Heart right ventricle (tissue), 16 donors: ENCODE measurements at regions of chr18 and their contacts with region 1.

Region 1: DNA sequence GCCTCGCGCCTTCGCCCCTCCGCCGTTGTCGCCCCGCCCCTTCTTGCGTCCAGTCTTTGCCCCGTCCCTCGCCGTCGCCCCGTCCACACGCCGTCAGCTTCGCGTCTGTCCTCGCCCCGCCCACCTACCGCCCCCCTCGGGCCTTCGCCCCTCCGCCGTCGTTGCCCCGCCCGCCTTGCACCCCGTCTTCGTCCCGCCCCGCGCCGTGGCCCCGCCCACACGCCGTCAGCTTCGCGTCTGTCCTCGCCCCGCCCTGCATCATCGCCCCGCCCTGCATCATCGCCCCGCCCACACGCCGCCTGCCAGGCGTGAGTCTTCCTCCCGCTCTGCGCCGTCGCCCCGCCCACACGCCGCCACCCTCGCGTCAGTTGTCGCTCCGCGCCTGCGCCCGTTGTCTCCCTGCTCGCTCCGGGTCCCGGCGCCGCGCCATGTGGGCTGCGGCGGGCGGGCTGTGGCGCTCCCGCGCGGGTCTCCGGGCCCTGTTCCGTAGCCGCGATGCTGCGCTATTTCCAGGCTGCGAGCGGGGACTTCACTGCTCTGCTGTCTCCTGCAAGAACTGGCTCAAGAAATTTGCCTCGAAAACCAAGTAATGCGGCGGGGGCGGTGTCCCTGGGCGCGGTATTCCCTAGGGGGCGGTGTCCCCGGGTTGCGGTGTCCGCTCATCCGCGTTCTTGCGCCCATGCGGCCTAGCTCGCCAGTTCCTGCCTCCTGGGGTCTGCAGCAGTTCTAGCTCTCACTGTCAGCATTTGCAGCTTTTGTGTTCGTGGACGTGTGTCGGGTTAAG is at the start of gene RBFA:
- DNase-seq: peak; percentile 100
- ATAC-seq: peak; percentile 94 to 97 (median 94)
- H3K4me3 ChIP-seq: peak within 1 kb of the TSS; percentile 45 to 96 (median 83)
- H3K27ac ChIP-seq: peak within 1 kb of the TSS; percentile 62 to 92 (median 88)
- H3K4me1 ChIP-seq: peaks cover 5 to 24% (median 11%) of the 10 kb centered on the region in 9 donors
- H3K27me3 ChIP-seq: no peaks in the 10 kb centered on the region
- CTCF ChIP-seq: peak in 8 of 9 donors; percentile 24 to 61 (median 38)
- total RNA-seq, gene RBFA: 13.6 to 30.6 (median 19.9) TPM

Region 2: DNA sequence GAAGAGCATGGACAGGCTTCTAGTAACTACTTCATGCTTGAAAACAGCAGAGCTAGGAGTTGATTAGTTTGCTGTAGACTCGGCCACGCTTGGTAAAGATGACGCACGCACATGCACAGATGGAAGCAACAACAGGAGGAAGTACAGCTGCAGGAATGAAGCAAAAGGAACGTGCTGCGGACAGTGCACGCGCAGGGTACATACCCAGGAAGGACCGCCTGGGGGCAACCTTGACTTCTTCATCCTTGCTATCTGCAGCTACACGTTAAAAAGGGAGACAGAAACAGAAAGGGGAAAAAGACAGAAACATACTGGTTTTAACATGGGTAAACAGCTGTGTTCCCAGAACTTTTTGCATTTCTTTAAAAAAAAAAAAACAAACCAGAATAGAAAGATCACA is 100.5 kb before region 1 on chr18:
- intact Hi-C with region 1: loop called in 1 of 10 experiments (anchors 10 kb)
- DNase-seq: no peak
- ATAC-seq: peak in 5 of 8 donors; percentile 28 to 64 (median 54)
- H3K4me3 ChIP-seq: peak overlapping the region in 1 of 10 donors; percentile 17
- H3K27ac ChIP-seq: peak overlapping the region in 5 of 10 donors; percentile 6 to 77 (median 36)
- H3K4me1 ChIP-seq: peaks cover 3 to 26% (median 15%) of the 10 kb centered on the region in 9 donors
- H3K27me3 ChIP-seq: no peaks in the 10 kb centered on the region
- CTCF ChIP-seq: peak in 3 of 9 donors; percentile 16 to 21 (median 20)

Region 3: GRCh38 chr18:79951578-79952455 is 82.4 kb before region 1 on chr18 and contains the start of gene SLC66A2:
- intact Hi-C with region 1: loop called in 3 of 10 experiments (anchors 5 to 10 kb)
- DNase-seq: peak; percentile 93 to 96
- ATAC-seq: peak; percentile 90 to 96 (median 93)
- H3K4me3 ChIP-seq: peak within 1 kb of the TSS; percentile 57 to 95 (median 86)
- H3K27ac ChIP-seq: peak within 1 kb of the TSS; percentile 41 to 93 (median 86)
- H3K4me1 ChIP-seq: peaks cover 6 to 53% (median 36%) of the 10 kb centered on the region in 9 donors
- H3K27me3 ChIP-seq: no peaks in the 10 kb centered on the region
- CTCF ChIP-seq: peak in 1 of 9 donors; percentile 17
- total RNA-seq, gene SLC66A2: 21.4 to 31.0 (median 23.5) TPM

Region 4: GRCh38 chr18:80068571-80069267 is 34.5 kb after region 1 on chr18:
- intact Hi-C with region 1: no loop called
- DNase-seq: no peak
- ATAC-seq: no peak
- H3K4me3 ChIP-seq: no peak overlapping the region
- H3K27ac ChIP-seq: no peak overlapping the region
- H3K4me1 ChIP-seq: no peaks in the 10 kb centered on the region
- H3K27me3 ChIP-seq: no peaks in the 10 kb centered on the region
- CTCF ChIP-seq: no peak

Region 5: GRCh38 chr18:80103231-80103630 is 69.0 kb after region 1 on chr18:
- intact Hi-C with region 1: loop called in 3 of 10 experiments (anchors 5 to 10 kb)
- DNase-seq: no peak
- ATAC-seq: peak in 6 of 8 donors; percentile 13 to 69 (median 54)
- H3K4me3 ChIP-seq: no peak overlapping the region
- H3K27ac ChIP-seq: peak overlapping the region in 2 of 10 donors; percentile 12 to 17
- H3K4me1 ChIP-seq: peaks cover 0 to 13% (median 8%) of the 10 kb centered on the region in 9 donors
- H3K27me3 ChIP-seq: no peaks in the 10 kb centered on the region
- CTCF ChIP-seq: no peak

Region 6: GRCh38 chr18:80147418-80148325 is 113.4 kb after region 1 on chr18:
- intact Hi-C with region 1: loop called in 1 of 10 experiments (anchors 10 kb)
- DNase-seq: peak; percentile 71 to 86
- ATAC-seq: peak; percentile 90 to 98 (median 94)
- H3K4me3 ChIP-seq: peak overlapping the region; percentile 26 to 72 (median 63)
- H3K27ac ChIP-seq: peak overlapping the region in 4 of 10 donors; percentile 7 to 47 (median 44)
- H3K4me1 ChIP-seq: peaks cover 0 to 21% (median 14%) of the 10 kb centered on the region in 9 donors
- H3K27me3 ChIP-seq: no peaks in the 10 kb centered on the region
- CTCF ChIP-seq: no peak

Region 7: GRCh38 chr18:80194874-80195570 is 160.8 kb after region 1 on chr18:
- intact Hi-C with region 1: no loop called
- DNase-seq: no peak
- ATAC-seq: no peak
- H3K4me3 ChIP-seq: no peak overlapping the region
- H3K27ac ChIP-seq: no peak overlapping the region
- H3K4me1 ChIP-seq: peaks cover 0 to 10% (median 0%) of the 10 kb centered on the region in 9 donors
- H3K27me3 ChIP-seq: peaks cover 0 to 18% (median 0%) of the 10 kb centered on the region in 7 donors
- CTCF ChIP-seq: no peak